Posterior cingulate gyrus (tissue), 11 donors: ENCODE measurements at regions of chr3 and their contacts with region 1.

Region 1: DNA sequence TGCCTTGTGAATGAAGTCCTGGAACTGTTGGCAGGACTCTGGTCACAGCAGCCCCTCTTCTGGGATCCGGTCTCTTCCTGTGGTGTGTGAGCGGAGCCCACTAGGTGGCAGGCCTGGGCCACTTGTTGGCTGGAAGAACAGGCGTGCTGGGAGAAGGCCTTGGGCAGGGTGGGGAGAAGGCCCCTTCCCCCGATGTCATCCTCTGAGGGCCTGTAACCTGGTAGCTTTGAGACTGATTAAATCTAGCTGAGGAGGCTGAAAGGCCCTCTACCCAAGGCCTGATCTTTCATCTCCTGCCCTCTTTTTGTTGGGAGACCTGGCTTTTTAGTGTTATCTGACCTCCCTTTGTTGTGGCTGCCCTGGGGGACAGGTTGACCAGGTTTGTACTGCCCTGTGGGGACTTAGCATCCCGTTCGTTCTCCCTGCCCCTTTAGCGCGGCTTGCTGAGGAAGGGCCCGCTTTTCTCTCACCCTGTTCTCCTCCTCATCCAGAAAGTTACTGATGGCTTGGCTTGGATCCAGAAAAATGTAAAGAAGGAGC is 48.3 kb downstream of the CHCHD6 start:
- DNase-seq: peak; percentile 60 to 97 (median 85)

Region 2: GRCh38 chr3:126679318-126679751 is 73.0 kb before region 1 on chr3:
- intact Hi-C with region 1: no loop called
- DNase-seq: peak; percentile 76 to 98 (median 88)

Region 3: DNA sequence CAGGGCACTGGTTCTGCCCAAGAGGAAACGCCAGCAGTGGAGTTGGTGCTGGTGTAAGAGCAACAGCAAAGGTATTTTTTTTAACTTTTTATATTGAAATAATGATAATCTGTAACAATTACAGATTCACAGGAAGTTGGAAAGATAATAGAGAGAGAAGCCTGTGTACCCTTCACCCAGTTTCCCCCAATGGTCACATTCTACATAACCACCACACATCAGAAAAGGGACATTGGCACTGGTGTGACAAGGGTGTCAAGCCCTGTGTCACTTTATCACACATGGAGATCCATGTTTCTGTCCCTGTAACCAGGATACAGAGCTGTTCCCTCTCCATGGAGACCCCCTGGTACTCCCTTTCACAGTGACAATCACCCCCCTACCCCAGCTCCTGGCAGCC is 221.4 kb after region 1 on chr3:
- intact Hi-C with region 1: loop called (anchors 2 kb)
- DNase-seq: peak in 2 of 10 donors; percentile 9 to 20

Region 4: DNA sequence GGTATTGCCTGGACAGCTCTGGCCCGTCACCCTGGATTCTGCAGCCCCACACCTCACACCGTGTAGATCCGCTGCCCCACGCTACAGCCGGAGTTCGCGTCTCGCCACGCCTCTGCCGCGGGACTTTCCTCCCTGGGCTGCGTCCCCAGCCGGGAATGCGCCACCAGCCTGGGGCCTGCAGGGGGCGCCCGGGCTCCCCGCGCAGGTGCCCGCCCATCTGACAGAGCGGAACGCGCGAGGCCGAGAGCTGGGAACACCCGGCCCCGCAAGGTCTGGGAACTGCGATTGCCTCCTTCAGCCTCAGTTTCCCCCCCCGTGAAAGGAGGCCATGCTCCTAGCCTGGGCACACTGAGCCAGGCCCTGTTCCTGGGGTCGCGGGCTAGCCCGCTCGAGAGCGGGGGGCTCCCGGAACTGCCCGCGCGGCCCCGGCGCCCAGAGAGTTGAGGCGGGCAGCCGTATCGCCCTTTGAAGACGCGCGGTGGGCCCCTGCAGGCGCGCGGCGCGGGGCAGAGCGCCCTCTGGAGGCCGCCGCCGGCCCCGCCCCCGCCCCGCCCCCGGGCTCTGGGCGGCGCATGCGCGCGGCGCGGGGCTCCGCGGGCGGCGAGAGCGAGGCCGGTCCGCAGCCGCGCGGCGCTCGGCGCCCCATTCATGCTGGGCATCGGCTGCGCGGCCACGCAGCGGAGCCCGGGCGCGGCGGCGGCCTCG is 230.2 kb after region 1 on chr3 and contains the start of gene PLXNA1:
- intact Hi-C with region 1: loop called (anchors 1 kb)
- DNase-seq: peak in 9 of 10 donors; percentile 35 to 96 (median 67)

Region 5: DNA sequence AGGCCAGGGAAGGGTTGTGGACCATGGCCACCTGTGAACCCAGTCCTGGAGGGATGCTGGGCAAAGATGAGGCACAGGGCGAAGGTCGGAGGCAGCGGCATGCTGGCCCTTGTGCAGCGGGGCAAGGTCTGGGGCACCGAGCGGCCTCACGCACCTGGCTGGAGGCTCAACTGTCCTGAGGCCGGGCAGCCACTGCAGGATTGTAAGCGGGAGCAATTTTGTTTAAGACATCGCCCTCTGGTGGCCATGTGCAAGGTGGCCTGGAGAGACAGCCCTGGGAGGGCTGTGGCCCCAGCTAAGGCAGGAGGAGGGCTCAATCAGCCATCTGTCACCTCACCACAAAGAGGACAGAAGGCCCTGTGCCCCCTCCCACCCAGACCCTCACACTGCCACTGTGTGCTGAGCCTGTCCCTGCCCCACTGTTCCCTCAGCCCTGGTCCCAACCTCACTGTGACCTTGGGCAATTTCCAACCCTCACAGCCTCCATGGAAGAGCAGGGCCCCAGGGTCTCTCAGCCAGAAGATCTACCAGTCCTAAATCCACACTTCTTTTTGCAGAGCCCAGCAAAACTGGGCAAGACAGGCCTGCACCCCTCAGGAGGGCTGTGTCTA is 791.9 kb after region 1 on chr3:
- intact Hi-C with region 1: loop called (anchors 5 kb)
- DNase-seq: peak in 8 of 10 donors; percentile 63 to 94 (median 76)